Dendritic cell treated with granulocyte-macrophage colony-stimulating factor and Interleukin-4, amounts not matched to agents 40 ng/mL and 50 ng/mL, for 4 days (primary cell): ENCODE measurements at regions of chr11 and their contacts with region 1.

Region 1: DNA sequence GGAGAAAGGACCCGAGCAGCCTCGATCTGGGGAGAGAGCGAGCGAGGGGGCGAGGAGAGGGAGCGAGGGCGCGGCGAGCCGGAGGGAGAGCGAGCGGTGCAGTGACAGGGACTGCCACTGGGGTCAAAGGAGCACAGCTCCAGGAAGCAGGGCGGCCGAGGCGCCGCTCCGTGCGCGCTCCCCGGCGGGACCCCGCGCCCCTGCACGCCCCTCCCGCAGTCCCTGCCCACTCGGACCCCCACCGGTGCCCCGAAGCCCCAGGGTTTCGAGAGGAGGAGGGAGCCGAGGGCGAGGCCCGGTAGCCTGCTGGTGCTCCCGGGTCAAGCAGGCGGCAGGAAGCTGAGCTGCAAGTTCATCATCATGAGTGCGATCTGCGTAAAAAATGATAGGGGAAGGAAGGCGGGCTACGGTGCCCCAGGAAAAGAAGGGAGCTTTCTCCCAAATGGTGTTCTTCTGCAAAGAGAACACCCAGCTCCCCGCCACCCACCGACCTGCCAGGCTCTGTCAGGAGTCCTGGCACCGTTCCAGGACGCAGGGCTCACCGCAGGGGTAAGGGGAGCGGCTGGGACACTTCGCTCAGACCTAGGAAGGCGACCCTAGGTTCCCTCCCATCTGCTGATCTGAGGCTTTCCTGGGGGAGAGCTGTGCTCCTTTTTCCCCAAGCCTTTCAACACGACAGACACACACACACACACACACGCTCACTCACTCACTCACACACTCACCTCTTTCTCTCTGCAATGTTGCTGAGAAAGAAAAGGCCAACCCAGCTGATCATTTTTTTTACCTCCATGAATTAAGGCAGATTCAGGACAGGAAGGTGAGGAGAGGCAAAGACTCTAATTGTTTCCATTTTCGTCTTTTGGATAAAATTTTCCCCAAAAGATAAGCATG is at the start of gene MPPED2:
- H3K4me3 Mint-ChIP-seq: peak within 1 kb of the TSS; percentile 70
- H3K27ac Mint-ChIP-seq: no peak within 1 kb of the TSS
- H3K4me1 Mint-ChIP-seq: peaks cover 15% of the 10 kb centered on the region
- H3K27me3 Mint-ChIP-seq: peaks cover 60% of the 10 kb centered on the region

Region 2: GRCh38 chr11:30432178-30432577 is 154.3 kb before region 1 on chr11:
- intact Hi-C with region 1: loop called (anchors 10 kb)
- H3K4me3 Mint-ChIP-seq: no peak overlapping the region
- H3K27ac Mint-ChIP-seq: no peak overlapping the region
- H3K4me1 Mint-ChIP-seq: peaks cover 18% of the 10 kb centered on the region
- H3K27me3 Mint-ChIP-seq: no peaks in the 10 kb centered on the region